PC-3 (cell line): ENCODE measurements at regions of chrX and their contacts with region 1.

Region 1: GRCh38 chrX:51496501-51497291 is at the start of gene NUDT11:
- DNase-seq: peak; percentile 51
- ATAC-seq: peak; percentile 90
- H3K4me3 ChIP-seq: peak within 1 kb of the TSS; percentile 64
- H3K27ac ChIP-seq: no peak within 1 kb of the TSS
- H3K4me1 ChIP-seq: no peaks in the 10 kb centered on the region
- H3K27me3 ChIP-seq: peaks cover 20% of the 10 kb centered on the region; the same call in 1 of the 2 replicates
- CTCF ChIP-seq: no peak
- total RNA-seq, gene NUDT11: 2.4 and 2.8 TPM in 2 replicates

Region 2: GRCh38 chrX:51420610-51421009 is 76.1 kb before region 1 on chrX:
- CTCF ChIA-PET with region 1: no interaction called
- POLR2A ChIA-PET with region 1: no interaction called
- intact Hi-C with region 1: no loop called
- DNase-seq: peak; percentile 59
- ATAC-seq: no peak
- H3K4me3 ChIP-seq: no peak overlapping the region
- H3K27ac ChIP-seq: no peak overlapping the region
- H3K4me1 ChIP-seq: no peaks in the 10 kb centered on the region
- H3K27me3 ChIP-seq: peaks cover 16% of the 10 kb centered on the region; the same call in 1 of the 2 replicates
- CTCF ChIP-seq: peak; percentile 73

Region 3: GRCh38 chrX:51507551-51507950 is 10.9 kb after region 1 on chrX:
- CTCF ChIA-PET with region 1: no interaction called
- POLR2A ChIA-PET with region 1: interaction called, 10 read pairs
- intact Hi-C with region 1: no loop called
- DNase-seq: no peak
- ATAC-seq: no peak
- H3K4me3 ChIP-seq: no peak overlapping the region
- H3K27ac ChIP-seq: no peak overlapping the region
- H3K4me1 ChIP-seq: no peaks in the 10 kb centered on the region
- H3K27me3 ChIP-seq: no peaks in the 10 kb centered on the region; the same call in 1 of the 2 replicates
- CTCF ChIP-seq: no peak

Region 4: DNA sequence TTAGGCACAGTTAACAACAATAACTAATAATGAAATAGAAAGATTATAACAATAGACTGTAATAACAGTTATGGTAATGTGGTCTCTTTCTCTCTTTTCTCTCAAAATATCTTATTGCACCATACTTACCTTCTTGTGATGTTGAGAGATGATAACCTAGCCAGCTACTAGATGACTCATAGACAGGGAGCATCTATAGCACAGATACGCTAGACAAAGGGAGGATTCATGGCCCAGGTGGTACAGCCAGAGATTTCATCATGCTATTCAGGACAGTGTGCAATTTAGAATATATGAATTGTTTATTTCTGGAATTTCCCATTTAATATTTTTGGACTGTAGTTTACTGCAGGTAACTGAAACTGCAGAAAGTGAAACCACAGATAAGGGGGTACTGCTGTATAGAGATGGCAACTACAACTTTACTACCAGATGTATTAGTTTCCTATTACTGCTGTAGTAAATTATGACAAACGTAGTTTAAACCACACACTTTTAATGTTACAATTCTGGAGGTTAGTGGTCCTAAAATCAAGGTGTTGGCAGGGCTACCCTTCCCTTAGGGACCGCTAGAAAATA is 354.9 kb after region 1 on chrX:
- CTCF ChIA-PET with region 1: no interaction called
- POLR2A ChIA-PET with region 1: no interaction called
- intact Hi-C with region 1: loop called (anchors 10 kb)
- DNase-seq: peak; percentile 28
- ATAC-seq: no peak
- H3K4me3 ChIP-seq: no peak overlapping the region
- H3K27ac ChIP-seq: no peak overlapping the region
- H3K4me1 ChIP-seq: no peaks in the 10 kb centered on the region
- H3K27me3 ChIP-seq: no peaks in the 10 kb centered on the region
- CTCF ChIP-seq: no peak